Activated CD4-positive, alpha-beta memory T cell treated with anti-CD3 and anti-CD28 coated beads for 36 hours (primary cell): ENCODE measurements at regions of chr13 and their contacts with region 1.

Region 1: GRCh38 chr13:40026174-40026585 is 370.7 kb downstream of the COG6 start:
- DNase-seq: peak; percentile 82
- H3K4me3 Mint-ChIP-seq: peak overlapping the region; percentile 3
- H3K27ac Mint-ChIP-seq: peak overlapping the region; percentile 83
- H3K4me1 Mint-ChIP-seq: peaks cover 44% of the 10 kb centered on the region
- H3K27me3 Mint-ChIP-seq: peaks cover 5% of the 10 kb centered on the region

Region 2: GRCh38 chr13:39777527-39778061 is 248.6 kb before region 1 on chr13:
- CTCF ChIA-PET with region 1: interaction called, 12 read pairs
- POLR2A ChIA-PET with region 1: no interaction called
- intact Hi-C with region 1: loop called (anchors 1 kb)
- DNase-seq: peak; percentile 72
- H3K4me3 Mint-ChIP-seq: peak overlapping the region; percentile 4
- H3K27ac Mint-ChIP-seq: peak overlapping the region; percentile 92
- H3K4me1 Mint-ChIP-seq: peaks cover 52% of the 10 kb centered on the region
- H3K27me3 Mint-ChIP-seq: no peaks in the 10 kb centered on the region

Region 3: GRCh38 chr13:39942552-39943273 is 83.5 kb before region 1 on chr13:
- CTCF ChIA-PET with region 1: interaction called, 19 read pairs
- POLR2A ChIA-PET with region 1: no interaction called
- intact Hi-C with region 1: no loop called
- DNase-seq: peak; percentile 78
- H3K4me3 Mint-ChIP-seq: no peak overlapping the region
- H3K27ac Mint-ChIP-seq: peak overlapping the region; percentile 9
- H3K4me1 Mint-ChIP-seq: peaks cover 6% of the 10 kb centered on the region
- H3K27me3 Mint-ChIP-seq: no peaks in the 10 kb centered on the region

Region 4: DNA sequence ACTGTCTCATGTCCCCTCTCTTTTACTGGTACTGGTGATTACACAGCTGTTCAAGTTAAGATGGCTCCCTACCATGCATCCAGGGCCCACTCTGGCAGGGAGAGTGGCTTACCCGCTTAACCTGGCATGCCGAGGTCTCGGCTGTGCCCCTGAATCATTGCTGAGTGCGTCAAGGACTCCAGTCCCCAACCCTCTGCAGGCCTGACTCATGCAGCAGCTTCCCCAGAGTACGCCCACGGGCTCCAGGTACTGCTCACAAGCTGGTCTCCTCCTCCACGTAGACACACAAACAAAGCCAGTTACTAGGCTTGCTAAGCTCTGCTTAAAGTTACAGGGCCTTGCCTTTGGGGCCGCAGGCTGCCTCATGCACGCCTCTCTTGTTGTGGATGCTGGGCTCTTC is 76.7 kb after region 1 on chr13:
- CTCF ChIA-PET with region 1: interaction called, 5 read pairs
- POLR2A ChIA-PET with region 1: interaction called, 5 read pairs
- intact Hi-C with region 1: loop called (anchors 1 kb)
- DNase-seq: peak; percentile 97
- H3K4me3 Mint-ChIP-seq: peak overlapping the region; percentile 56
- H3K27ac Mint-ChIP-seq: peak overlapping the region; percentile 98
- H3K4me1 Mint-ChIP-seq: peaks cover 55% of the 10 kb centered on the region
- H3K27me3 Mint-ChIP-seq: no peaks in the 10 kb centered on the region

Region 5: GRCh38 chr13:40206241-40207000 is 180.2 kb after region 1 on chr13:
- CTCF ChIA-PET with region 1: no interaction called
- POLR2A ChIA-PET with region 1: no interaction called
- intact Hi-C with region 1: loop called (anchors 1 kb)
- DNase-seq: peak; percentile 68
- H3K4me3 Mint-ChIP-seq: peak overlapping the region; percentile 60
- H3K27ac Mint-ChIP-seq: peak overlapping the region; percentile 99
- H3K4me1 Mint-ChIP-seq: peaks cover 52% of the 10 kb centered on the region
- H3K27me3 Mint-ChIP-seq: no peaks in the 10 kb centered on the region

Region 6: DNA sequence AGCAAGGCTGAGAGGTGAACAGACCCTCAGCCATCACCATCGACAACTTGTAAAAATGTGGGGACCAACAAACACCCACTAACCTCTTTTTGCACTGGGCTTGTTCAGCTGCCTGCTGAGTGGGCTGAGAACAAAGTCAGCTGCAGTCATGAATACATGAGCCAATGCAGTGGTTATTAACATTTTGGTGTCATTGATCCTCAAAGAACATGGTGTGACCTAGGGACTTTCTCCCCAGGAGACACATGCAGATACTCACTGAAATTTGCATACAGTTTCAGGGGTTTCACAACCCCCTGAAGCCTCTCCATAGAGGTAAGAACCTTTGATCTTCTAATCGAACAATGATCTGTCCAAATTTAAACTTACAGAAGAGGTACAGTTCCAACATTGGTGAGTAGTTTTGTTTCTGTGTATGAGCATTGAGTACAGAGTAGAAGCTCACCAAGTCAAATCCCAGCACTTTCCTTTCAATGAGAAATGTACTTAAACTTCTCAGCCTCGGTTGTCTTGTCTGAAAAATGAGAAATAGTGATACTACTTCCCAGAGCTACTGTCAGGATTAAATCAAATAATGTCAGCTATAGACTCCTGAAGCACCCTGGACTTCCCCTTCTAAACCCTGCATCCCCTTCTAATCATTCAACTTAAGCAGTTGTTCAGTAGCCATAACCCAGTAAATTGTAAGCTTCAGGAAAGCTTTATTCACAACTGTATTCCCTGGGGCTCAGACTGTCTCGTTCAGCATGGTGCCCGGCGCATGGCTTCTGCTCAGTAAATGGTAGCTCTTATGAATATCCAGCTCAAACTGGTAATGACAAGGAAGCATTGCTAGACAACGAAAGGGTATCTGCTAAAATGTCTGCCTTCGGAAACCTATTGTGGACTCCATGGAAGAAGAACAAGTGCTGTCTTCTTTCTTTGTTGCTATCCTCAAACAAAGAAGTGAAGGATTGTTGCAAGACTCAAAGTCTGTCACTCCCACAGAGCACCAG is 491.6 kb after region 1 on chr13:
- CTCF ChIA-PET with region 1: no interaction called
- POLR2A ChIA-PET with region 1: interaction called, 3 read pairs
- intact Hi-C with region 1: loop called (anchors 10 kb)
- DNase-seq: peak; percentile 48
- H3K4me3 Mint-ChIP-seq: peak overlapping the region; percentile 61
- H3K27ac Mint-ChIP-seq: peak overlapping the region; percentile 86
- H3K4me1 Mint-ChIP-seq: peaks cover 71% of the 10 kb centered on the region
- H3K27me3 Mint-ChIP-seq: no peaks in the 10 kb centered on the region

Region 7: GRCh38 chr13:41004875-41005693 is 978.9 kb after region 1 on chr13:
- CTCF ChIA-PET with region 1: no interaction called
- POLR2A ChIA-PET with region 1: no interaction called
- intact Hi-C with region 1: loop called (anchors 10 kb)
- DNase-seq: no peak
- H3K4me3 Mint-ChIP-seq: peak overlapping the region; percentile 64
- H3K27ac Mint-ChIP-seq: peak overlapping the region; percentile 79
- H3K4me1 Mint-ChIP-seq: peaks cover 65% of the 10 kb centered on the region
- H3K27me3 Mint-ChIP-seq: no peaks in the 10 kb centered on the region